MCF 10A (cell line): ENCODE measurements at regions of chr10 and their contacts with region 1.

Region 1: DNA sequence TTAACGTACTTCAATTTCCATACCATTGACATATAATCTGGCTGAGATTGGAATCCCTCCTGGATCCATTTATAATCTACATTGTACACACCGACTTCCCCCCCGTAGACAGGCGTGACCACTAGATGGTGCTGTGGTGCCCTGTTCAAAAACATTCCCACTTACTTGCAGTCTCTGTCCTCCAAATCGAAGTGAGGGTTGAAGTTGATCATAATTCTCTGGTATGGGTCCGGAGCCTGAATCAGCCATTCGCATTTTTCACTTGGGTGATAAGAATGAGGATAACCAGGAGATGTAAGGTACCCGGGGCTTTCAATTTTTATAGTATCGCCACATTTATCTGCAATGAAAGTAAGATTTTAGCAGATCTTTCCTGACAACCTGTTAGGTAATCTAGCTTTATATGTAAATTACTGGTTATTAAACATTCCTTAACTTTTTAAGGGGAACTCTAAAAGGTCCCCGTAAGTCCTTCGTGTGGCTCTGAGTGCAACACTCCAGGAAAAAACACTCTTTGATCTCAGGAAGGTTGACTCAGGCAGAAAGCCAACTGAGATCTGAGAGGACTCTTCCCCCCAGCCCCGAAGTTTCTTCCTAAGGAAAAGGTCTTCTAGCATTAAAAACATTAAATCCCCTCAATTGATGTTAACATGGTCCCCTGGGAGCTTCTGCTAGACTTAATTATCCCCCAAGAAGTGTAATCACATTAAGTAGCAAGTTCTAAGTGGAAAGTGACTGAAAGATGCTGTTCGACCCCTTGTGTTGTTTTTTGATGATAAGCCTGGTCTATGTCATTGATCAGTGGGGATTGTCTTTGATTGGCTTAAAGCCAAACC is 3.7 kb downstream of the NRP1 start:
- DNase-seq: peak; percentile 84
- H3K4me3 Mint-ChIP-seq: peak overlapping the region; percentile 94
- H3K27ac Mint-ChIP-seq: peak overlapping the region; percentile 46
- H3K4me1 Mint-ChIP-seq: peaks cover 41% of the 10 kb centered on the region
- H3K27me3 Mint-ChIP-seq: no peaks in the 10 kb centered on the region
- CTCF ChIP-seq: peak; percentile 77

Region 2: DNA sequence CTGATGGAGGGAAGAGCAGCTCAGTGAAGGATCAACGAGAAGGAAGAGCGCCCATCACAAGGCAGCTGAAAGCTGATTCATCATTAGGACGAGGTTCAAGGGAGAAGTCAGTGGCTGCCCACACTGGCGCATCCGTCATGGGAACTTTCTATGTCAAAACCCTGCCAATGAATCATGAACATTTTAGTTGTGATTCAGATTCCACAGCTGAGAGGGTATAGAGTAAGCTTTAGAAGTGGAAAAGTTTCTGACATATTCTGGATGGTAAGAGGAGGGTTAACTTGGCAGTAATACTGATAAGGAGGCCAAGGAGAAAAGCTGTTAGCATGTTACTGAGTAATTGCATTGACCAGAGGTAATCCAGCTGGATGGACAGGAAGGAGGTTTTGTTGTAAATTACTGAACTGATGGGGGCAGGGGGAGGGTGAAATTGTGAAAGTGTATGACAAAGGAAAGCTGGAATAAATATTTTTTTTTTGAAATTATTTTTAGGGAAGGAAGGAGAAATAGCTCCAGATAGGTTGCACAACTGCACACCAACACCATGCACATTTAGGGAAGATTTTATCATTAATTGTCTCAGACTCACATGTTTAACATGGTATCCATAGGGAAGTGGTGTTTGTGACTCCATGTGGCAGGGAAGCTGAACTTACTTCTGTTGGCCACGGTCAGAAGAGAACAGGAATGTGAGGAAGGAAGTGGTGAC is 82.0 kb after region 1 on chr10:
- CTCF ChIA-PET with region 1: no interaction called
- POLR2A ChIA-PET with region 1: no interaction called
- intact Hi-C with region 1: loop called (anchors 2 kb)
- DNase-seq: peak; percentile 86
- H3K4me3 Mint-ChIP-seq: no peak overlapping the region
- H3K27ac Mint-ChIP-seq: peak overlapping the region; percentile 52
- H3K4me1 Mint-ChIP-seq: peaks cover 20% of the 10 kb centered on the region
- H3K27me3 Mint-ChIP-seq: no peaks in the 10 kb centered on the region
- CTCF ChIP-seq: no peak

Region 3: DNA sequence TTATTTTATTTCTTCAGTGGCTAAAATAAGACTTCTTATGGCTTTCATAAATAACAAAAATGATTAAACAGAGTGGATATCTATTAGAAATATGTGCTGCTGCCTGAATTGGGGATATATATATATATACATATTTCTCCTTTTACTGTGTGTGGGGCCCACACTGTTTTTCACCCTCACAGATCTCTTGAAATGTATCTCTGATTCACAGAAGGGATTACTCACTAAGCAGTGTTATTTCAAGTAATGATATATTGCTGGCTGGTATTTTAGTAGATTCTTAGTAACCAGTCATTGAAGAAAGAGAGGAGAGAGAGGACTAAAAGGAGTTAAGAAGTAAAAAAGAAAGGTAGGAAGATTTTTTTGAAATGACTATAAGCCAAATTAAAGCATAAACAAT is 312.3 kb after region 1 on chr10:
- CTCF ChIA-PET with region 1: no interaction called
- POLR2A ChIA-PET with region 1: no interaction called
- intact Hi-C with region 1: loop called (anchors 10 kb)
- DNase-seq: no peak
- H3K4me3 Mint-ChIP-seq: no peak overlapping the region
- H3K27ac Mint-ChIP-seq: no peak overlapping the region
- H3K4me1 Mint-ChIP-seq: peaks cover 7% of the 10 kb centered on the region
- H3K27me3 Mint-ChIP-seq: no peaks in the 10 kb centered on the region
- CTCF ChIP-seq: no peak

Region 4: GRCh38 chr10:33901166-33901565 is 570.4 kb after region 1 on chr10:
- CTCF ChIA-PET with region 1: no interaction called
- POLR2A ChIA-PET with region 1: no interaction called
- intact Hi-C with region 1: loop called (anchors 5 kb)
- DNase-seq: peak; percentile 63
- H3K4me3 Mint-ChIP-seq: no peak overlapping the region
- H3K27ac Mint-ChIP-seq: peak overlapping the region; percentile 27
- H3K4me1 Mint-ChIP-seq: peaks cover 44% of the 10 kb centered on the region
- H3K27me3 Mint-ChIP-seq: no peaks in the 10 kb centered on the region
- CTCF ChIP-seq: no peak

Region 5: DNA sequence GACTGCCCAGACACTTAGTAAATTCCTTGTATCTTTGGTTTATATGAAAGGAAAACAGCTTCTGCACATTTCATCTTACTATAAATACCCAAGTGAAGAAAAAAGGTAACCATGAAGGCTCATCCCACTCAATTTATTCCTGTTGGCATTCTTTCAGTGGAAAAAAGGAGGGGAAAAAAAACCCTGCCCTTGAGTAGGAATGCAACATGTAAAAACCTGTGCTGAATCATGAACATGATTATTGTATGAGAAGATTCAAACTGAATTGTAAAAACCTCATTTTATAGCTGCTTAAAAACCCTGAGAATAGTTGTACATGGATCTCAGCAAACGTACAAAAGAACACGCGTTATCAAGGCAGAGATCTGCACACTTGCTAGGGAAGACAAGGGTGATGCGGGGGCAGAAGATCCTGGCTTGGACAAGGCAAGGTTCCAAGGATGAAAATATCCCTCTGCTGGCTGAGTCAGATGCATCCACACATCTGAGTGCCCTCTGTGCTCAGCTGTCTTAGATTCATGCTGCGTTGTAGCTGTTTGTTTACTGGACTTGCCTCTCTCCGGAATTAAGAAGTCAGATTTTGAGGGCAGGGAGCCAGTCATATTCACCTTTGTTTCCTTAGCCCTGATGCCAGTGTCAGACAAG is 826.1 kb after region 1 on chr10:
- CTCF ChIA-PET with region 1: no interaction called
- POLR2A ChIA-PET with region 1: interaction called, 5 read pairs
- intact Hi-C with region 1: loop called (anchors 1 kb)
- DNase-seq: peak; percentile 74
- H3K4me3 Mint-ChIP-seq: peak overlapping the region; percentile 7
- H3K27ac Mint-ChIP-seq: peak overlapping the region; percentile 57
- H3K4me1 Mint-ChIP-seq: peaks cover 27% of the 10 kb centered on the region
- H3K27me3 Mint-ChIP-seq: no peaks in the 10 kb centered on the region
- CTCF ChIP-seq: peak; percentile 20

Region 6: DNA sequence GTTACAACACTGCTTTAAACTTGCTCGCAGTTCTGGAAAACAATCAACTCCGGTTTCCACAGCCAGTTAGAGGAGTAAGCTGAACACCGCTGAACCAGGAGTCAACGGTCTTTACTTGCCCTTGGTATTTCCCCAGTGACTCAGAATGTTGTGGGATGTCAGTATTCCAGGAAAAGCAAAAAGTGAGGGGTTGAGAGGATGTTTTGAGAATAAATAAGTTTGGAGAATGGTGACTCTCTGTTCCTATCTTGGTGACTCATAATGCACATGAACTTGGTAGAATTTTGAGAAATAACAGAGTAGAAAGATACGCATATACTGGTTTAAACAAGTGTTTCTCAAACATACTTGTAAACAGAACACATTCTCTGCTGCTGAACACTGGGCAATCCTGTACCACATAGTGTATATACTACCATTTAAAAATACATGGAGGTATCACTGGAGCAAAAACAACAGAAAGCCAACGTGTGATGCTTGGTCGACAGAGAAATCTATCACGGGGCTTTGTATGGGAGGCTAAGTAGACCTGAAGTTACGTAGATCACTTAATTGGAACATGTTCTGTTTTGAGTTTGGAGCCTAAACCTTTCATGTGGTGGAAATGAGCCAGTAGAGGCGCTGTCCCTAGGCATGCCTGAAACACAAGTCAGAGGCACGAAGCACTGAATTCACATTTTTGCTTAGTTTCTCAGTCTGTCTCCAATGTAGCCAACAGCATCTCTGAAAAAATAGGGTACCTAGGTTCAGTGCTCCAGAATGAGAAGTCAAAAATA is 950.0 kb after region 1 on chr10:
- CTCF ChIA-PET with region 1: no interaction called
- POLR2A ChIA-PET with region 1: interaction called, 5 read pairs
- intact Hi-C with region 1: loop called (anchors 1 kb)
- DNase-seq: peak; percentile 99
- H3K4me3 Mint-ChIP-seq: peak overlapping the region; percentile 22
- H3K27ac Mint-ChIP-seq: peak overlapping the region; percentile 98
- H3K4me1 Mint-ChIP-seq: peaks cover 27% of the 10 kb centered on the region
- H3K27me3 Mint-ChIP-seq: no peaks in the 10 kb centered on the region
- CTCF ChIP-seq: peak; percentile 46

Region 7: DNA sequence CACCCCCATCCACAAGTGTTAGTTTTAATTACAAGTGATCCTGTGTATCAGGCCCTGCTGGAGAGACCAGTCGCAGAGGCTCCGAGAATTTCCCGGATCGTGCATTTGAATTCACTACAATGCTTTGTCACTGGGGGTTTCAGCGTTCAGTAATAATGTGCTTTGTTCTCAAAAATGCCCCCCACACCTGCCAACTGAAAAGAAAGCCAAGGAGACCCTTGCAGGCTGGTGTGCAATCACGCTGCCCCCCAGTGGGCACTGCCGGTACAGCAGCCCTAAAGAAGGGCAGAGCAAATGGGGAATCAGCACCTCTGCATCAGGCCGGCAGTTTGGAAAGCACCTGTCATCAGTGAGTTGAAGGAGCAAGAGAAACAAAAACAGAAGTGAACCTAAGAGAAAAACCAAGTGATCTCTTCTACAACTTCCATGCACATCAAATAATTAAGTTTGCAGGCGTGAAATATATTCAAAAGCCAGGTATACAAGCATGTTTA is 1306.7 kb after region 1 on chr10:
- CTCF ChIA-PET with region 1: interaction called, 16 read pairs
- POLR2A ChIA-PET with region 1: interaction called, 3 read pairs
- intact Hi-C with region 1: loop called (anchors 1 kb)
- DNase-seq: peak; percentile 51
- H3K4me3 Mint-ChIP-seq: no peak overlapping the region
- H3K27ac Mint-ChIP-seq: peak overlapping the region; percentile 2
- H3K4me1 Mint-ChIP-seq: peaks cover 40% of the 10 kb centered on the region
- H3K27me3 Mint-ChIP-seq: no peaks in the 10 kb centered on the region
- CTCF ChIP-seq: peak; percentile 98